Mammary epithelial cell (primary cell): ENCODE measurements at regions of chr12 and their contacts with region 1.

Region 1: DNA sequence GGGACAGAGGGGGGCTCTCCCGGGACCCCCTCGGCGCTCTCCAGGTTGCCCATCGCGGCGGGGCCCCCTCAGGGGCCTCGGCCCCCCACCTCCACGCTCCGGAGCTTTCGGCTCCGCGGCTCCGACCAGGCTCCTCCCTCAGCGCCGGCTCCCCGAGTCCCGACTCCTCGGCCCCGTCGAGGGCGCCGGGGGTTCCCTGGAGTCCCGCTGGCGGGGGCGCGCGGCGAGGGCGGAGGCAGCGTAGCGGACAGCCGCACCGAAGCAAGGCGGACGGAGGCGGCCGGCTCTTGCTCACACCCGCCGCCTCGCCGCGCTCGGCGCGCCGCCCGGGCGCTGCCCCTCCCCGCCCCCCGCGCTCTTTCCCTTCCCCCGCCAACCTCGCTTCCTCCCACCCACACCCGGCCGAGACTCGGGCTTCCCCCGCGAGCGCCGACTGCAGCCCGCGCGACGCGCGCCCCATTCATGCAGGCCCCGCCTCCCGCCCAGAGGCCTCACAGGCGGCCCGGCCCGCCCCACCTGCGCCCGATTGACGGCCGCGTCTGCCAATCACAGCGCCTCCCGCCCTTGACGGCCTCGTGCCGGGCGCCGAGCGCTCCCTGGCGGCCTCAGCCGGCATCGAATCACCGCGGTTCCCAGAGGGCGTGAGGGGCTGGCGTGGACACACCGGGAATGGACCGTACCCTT is at the start of gene FMNL3:
- DNase-seq: peak; percentile 95
- H3K4me3 ChIP-seq: peak within 1 kb of the TSS; percentile 74 to 85 (median 85)
- H3K27ac ChIP-seq: peak within 1 kb of the TSS; percentile 59
- H3K4me1 ChIP-seq: peaks cover 31% of the 10 kb centered on the region
- H3K27me3 ChIP-seq: no peaks in the 10 kb centered on the region
- CTCF ChIP-seq: peak; percentile 84 to 96
- total RNA-seq, gene FMNL3: 17.6 to 32.0 TPM

Region 2: GRCh38 chr12:49288412-49288853 is 418.8 kb before region 1 on chr12:
- CTCF ChIA-PET with region 1: no interaction called
- dilution Hi-C with region 1: no loop called
- in situ Hi-C with region 1: no loop called
- intact Hi-C with region 1: loop called (anchors 5 kb)
- DNase-seq: peak; percentile 45
- H3K4me3 ChIP-seq: no peak overlapping the region
- H3K27ac ChIP-seq: no peak overlapping the region
- H3K4me1 ChIP-seq: peaks cover 11% of the 10 kb centered on the region
- H3K27me3 ChIP-seq: no peaks in the 10 kb centered on the region
- CTCF ChIP-seq: peak; percentile 78 to 80

Region 3: DNA sequence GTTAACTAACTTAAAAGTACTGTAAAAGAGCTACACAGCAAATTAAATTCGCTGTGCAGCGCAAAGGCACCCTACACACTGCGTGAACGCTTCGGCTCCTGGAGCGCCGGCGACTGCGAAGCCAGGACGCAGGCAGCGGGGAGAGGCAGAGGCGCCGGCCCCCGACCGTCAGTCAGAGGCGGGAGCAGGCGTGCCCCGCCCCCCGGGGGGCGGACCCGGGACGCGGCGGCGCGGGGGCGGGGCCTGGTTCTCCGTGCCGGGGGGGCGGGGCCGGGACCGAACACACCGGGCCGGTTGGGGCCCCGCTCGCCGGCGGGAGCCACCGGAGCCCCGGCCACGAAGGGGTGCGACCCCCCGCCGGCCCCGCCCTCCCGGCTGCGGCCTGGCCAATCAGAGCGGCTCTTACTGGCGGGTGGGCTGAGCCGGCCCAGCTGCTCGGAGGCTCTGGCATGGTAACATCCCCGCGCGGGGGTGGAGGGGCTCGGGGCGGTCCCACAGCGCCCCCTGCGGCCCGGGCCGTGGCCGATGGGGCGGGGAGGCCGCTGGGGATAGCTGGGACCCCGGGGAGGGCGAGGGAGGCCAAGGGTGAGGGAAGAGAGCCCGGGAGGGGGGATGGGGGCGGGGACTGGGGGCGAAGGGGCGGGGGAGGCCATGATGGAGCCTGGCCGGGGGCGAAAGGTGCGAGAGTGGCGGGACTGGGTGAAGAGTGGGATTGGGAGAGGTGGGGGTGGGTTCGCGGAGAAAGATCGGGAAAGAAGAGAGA is 83.9 kb before region 1 on chr12 and contains the start of gene PRPF40B:
- CTCF ChIA-PET with region 1: interaction called, 17 read pairs
- dilution Hi-C with region 1: loop called (anchors 10 kb)
- in situ Hi-C with region 1: no loop called
- intact Hi-C with region 1: no loop called
- DNase-seq: peak; percentile 79
- H3K4me3 ChIP-seq: peak within 1 kb of the TSS; percentile 57 to 74 (median 58)
- H3K27ac ChIP-seq: peak within 1 kb of the TSS; percentile 72
- H3K4me1 ChIP-seq: peaks cover 68% of the 10 kb centered on the region
- H3K27me3 ChIP-seq: no peaks in the 10 kb centered on the region
- CTCF ChIP-seq: peak in 1 of 2 donors; percentile 49
- total RNA-seq, gene PRPF40B: 8.0 to 34.4 TPM

Region 4: DNA sequence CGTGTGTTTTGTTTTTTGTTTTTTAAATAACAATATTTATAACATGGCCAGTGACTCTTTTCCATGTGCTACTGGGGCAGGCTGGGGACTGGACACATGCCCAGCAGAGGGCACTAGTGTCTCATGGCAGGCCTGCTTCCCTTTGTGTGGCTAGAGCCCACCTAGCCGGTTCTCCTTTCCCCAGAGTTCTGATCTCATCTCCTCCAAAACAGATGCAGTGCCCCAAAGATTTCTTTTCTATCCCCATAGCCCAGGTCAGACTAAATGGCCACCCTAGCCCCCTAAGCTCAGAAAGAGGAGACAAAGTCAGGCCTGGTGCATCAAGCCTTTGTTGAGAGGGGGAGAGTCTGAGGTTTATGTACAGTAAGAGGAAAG is 62.7 kb before region 1 on chr12:
- CTCF ChIA-PET with region 1: interaction called, 4 read pairs
- dilution Hi-C with region 1: loop called (anchors 5 kb)
- in situ Hi-C with region 1: loop called (anchors 5 kb)
- intact Hi-C with region 1: loop called (anchors 1 kb)
- DNase-seq: peak; percentile 51
- H3K4me3 ChIP-seq: no peak overlapping the region
- H3K27ac ChIP-seq: peak overlapping the region; percentile 37
- H3K4me1 ChIP-seq: peaks cover 17% of the 10 kb centered on the region
- H3K27me3 ChIP-seq: no peaks in the 10 kb centered on the region
- CTCF ChIP-seq: peak; percentile 87 to 98

Region 5: DNA sequence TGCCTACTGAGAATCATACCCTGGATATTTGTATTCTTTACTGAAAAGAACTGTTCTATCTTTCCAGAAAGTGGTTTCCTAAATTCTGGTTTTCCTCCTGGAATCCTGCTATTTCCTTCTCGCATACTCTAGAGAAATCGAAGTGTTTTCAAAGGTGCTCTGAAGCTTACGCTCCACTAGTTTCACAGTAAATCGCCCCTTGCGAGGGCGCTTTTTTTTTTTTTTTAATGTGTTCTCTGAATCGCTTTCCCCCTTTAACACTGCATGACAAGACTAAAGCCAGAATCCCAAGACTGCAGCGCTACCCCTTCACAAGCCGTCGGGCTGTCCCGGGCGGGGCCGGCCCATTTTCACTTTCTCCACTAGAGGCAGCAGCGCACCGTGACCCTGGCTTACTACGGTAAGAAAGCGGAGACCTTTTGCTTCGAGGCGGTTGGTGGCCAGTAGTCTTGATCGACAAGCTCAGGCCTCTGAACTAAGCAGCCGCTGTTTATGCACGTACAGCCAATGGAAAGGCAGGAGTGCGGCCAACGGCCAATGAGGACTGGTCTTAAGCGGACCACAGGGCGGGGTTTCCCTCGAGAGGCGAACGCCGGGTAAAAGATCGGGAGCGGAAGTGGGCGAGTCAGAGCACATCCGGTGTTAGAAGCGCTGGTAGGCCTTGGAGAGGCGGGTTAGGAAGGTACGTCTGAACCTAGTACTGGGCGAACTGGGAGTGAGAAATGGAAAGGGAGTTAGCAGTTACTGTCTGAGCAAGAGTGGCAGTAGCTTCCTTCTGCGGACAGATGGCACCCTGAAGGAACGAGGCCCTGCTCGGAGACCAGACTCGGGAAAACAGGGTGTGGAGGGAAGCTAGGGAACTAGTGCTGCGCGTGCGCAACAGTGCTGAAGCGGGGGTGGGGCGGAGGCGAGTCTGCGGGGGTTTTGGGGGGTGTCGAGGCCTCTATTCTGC is 33.9 kb after region 1 on chr12 and contains the start of gene TMBIM6:
- CTCF ChIA-PET with region 1: no interaction called
- dilution Hi-C with region 1: no loop called
- in situ Hi-C with region 1: no loop called
- intact Hi-C with region 1: loop called (anchors 1 kb)
- DNase-seq: peak; percentile 100
- H3K4me3 ChIP-seq: peak within 1 kb of the TSS; percentile 55 to 74 (median 69)
- H3K27ac ChIP-seq: peak within 1 kb of the TSS; percentile 92
- H3K4me1 ChIP-seq: peaks cover 17% of the 10 kb centered on the region
- H3K27me3 ChIP-seq: no peaks in the 10 kb centered on the region
- CTCF ChIP-seq: peak; percentile 92 to 93
- total RNA-seq, gene TMBIM6: 535 to 649 TPM